Sciatic nerve (tissue), 2 donors: ENCODE measurements at regions of chr12 and their contacts with region 1.

Region 1: DNA sequence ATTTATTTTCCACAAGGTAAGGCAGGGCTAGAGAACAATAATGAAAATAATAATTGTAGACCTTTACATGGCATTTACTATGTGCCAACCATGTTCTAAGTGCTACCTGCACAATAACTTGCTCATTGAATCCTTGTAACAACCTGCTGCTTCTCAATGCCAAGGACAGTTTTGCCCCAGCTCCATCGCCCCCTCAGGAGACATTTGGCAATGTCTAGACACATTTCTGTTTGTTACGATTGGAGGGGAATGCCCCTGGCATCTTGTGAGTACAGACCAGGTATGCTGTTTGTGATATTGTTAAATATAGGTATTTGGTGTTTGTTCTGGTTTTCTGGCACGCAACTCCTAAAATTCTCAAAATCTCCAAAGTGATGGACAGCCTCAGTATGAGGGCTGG is 8.1 kb upstream of the ATXN2 start:
- DNase-seq: no peak
- ATAC-seq: no peak

Region 2: GRCh38 chr12:111532741-111533140 is 74.5 kb before region 1 on chr12:
- intact Hi-C with region 1: loop called (anchors 2 kb)
- DNase-seq: no peak
- ATAC-seq: no peak

Region 3: DNA sequence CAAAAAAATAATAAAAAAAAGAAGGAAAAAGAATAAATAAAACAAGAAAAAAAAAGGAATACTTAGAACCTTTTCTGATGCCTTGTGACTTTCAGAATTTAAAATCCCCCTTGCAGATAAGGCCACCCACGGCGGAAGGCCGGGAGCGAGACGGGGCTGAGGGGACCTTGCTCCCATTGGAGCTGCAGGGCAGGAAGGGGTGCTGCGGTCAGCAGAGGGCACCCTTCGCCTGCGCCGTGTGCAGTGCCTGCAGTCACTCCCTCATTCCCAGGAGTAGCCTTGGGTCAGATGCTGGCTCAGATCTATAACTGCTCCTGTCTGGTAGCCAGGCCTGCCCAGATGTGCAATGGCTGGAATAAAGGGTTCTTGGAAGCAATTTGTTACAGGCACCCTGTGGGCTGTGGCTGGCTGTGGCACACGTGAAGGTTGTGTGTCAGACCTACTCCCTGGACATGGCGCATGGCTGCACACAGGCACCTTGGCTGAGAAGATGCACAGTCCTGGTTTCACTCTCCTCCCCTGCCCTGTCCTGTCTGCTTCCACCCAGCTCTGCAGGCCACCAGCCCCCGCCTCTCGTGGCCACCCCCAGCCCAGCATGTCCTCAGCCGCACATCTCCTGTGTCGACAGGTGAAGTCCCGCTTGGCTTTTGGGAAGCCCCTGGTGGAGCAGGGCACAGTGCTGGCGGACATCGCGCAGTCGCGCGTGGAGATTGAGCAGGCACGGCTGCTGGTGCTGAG is 146.1 kb after region 1 on chr12:
- intact Hi-C with region 1: no loop called
- DNase-seq: peak; percentile 79
- ATAC-seq: peak; percentile 92